CD14-positive monocyte (primary cell): ENCODE measurements at regions of chr1 and their contacts with region 1.

Region 1: DNA sequence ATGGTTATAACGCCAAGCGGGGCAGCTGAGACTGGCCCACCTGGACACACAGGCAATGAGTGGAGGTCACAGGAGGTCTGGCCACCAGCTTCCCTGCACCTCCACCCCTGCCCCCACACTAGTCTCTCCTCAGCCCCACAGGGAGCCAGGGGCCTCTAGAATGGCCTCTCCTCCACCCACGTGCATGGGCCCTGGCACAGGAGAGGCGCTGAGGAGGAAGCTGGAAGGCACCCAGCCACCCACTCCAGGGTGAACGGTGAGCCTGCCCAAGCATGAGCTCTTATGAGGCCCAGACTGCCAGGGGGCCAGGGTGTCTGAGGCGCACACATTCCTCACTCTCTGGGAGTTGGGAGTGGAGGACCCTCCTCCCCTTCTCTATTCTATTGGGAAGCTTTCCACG is 22.2 kb downstream of the LRP8 start:
- DNase-seq: no peak
- H3K4me3 ChIP-seq: no peak overlapping the region
- H3K4me3 Mint-ChIP-seq: no peak overlapping the region
- H3K27ac ChIP-seq: no peak overlapping the region
- H3K27ac Mint-ChIP-seq: peak overlapping the region in 4 of 7 donors; percentile 9 to 83 (median 58)
- H3K4me1 ChIP-seq: no peaks in the 10 kb centered on the region
- H3K4me1 Mint-ChIP-seq: no peaks in the 10 kb centered on the region
- H3K27me3 ChIP-seq: no peaks in the 10 kb centered on the region
- H3K27me3 Mint-ChIP-seq: no peaks in the 10 kb centered on the region
- CTCF ChIP-seq: no peak

Region 2: GRCh38 chr1:53348486-53349368 is 43.1 kb after region 1 on chr1:
- intact Hi-C with region 1: no loop called
- DNase-seq: no peak
- H3K4me3 ChIP-seq: no peak overlapping the region
- H3K4me3 Mint-ChIP-seq: no peak overlapping the region
- H3K27ac ChIP-seq: no peak overlapping the region
- H3K27ac Mint-ChIP-seq: no peak overlapping the region
- H3K4me1 ChIP-seq: no peaks in the 10 kb centered on the region
- H3K4me1 Mint-ChIP-seq: no peaks in the 10 kb centered on the region
- H3K27me3 ChIP-seq: no peaks in the 10 kb centered on the region
- H3K27me3 Mint-ChIP-seq: peaks cover 0 to 4% (median 3%) of the 10 kb centered on the region in 3 donors
- CTCF ChIP-seq: no peak

Region 3: DNA sequence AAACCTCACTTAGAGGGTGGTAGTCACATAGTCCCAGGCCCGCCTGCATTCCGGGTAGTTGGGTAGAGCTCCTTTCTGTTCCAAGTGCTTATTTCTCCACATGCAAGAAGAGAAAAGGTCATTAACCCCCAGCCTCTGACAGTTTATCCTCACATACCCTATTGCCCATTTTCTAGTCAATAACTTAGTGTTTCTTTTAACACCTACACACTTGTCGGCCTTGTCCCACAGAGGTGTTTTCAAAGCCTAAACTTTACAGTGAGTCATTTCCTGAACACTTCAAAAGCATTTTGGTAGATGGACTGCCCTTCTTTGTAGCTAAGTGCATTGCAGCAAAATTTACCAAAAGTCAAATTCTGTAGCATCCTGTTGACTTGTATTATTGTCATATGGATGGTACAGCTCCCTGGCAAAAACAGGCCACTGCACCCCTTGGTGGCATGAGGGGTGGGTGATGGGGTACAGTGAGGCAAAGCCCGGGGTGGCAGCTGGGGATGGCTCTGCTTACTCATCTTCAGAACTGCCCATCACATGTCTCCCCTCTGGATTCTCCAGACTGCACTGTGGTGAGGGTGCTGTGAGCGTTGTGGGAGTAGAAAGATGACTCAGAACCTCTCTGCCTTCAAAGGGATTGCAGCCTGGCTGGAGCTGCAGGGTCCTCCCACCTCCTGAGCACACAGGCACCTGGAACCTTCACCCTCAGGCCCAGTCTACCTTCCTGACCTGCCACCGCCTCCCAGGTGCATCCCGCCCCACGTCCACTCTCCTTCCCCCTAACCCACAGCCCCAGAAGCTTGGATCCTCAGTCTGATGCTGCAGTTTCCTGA is 107.7 kb after region 1 on chr1:
- intact Hi-C with region 1: no loop called
- DNase-seq: no peak
- H3K4me3 ChIP-seq: no peak overlapping the region
- H3K4me3 Mint-ChIP-seq: no peak overlapping the region
- H3K27ac ChIP-seq: no peak overlapping the region
- H3K27ac Mint-ChIP-seq: peak overlapping the region in 2 of 7 donors; percentile 21 to 50
- H3K4me1 ChIP-seq: no peaks in the 10 kb centered on the region
- H3K4me1 Mint-ChIP-seq: peaks cover 3% of the 10 kb centered on the region
- H3K27me3 ChIP-seq: no peaks in the 10 kb centered on the region
- H3K27me3 Mint-ChIP-seq: peaks cover 0 to 8% (median 3%) of the 10 kb centered on the region in 3 donors
- CTCF ChIP-seq: no peak

Region 4: DNA sequence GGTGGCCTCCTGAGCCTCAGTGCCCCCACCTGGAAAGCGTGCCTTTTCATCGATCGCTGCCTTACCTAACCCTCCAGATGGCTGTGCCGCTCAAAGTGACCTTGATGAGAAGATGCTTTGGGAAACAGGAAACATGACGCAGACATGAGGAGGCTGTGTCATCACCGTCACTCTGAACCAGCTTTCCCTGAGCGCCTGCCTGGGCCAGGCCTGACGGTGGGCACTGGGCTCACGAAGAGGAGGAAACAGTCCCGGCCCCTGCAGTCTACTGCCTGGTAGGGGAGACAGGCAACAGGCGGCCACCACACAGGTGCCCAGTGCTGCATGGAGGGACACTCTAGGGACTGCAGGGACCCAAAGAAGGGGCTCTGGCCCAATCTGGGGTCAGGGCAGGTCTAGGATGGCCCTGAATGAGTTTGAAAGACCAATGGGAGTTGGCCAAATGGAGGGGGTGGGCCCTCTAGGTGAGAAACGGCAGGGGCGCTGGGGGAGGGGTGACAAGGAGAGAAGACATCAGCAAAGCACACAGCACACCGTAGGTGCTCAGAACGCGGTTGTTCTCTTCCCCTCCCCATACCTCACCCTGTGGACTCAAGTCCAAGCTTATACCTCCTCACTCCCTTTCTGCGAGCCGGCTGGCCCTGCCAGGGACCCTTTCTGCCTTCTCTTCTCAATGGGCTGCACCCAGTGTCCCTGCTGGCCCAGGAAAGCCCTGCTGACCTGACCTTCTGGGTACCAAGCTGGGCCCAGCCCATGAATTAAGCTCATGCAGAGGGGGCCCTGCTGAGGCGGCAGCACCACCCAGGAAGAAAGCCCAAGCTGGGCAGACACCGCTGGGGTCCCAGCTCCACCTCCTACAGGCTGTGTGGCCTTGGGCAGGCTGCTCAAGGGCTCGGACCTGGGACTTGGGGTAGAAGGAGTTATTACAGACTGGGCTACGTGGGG is 388.4 kb after region 1 on chr1:
- intact Hi-C with region 1: loop called in 1 of 2 experiments (anchors 5 kb)
- DNase-seq: no peak
- H3K4me3 ChIP-seq: no peak overlapping the region
- H3K4me3 Mint-ChIP-seq: no peak overlapping the region
- H3K27ac ChIP-seq: no peak overlapping the region
- H3K27ac Mint-ChIP-seq: peak overlapping the region in 1 of 7 donors; percentile 47
- H3K4me1 ChIP-seq: no peaks in the 10 kb centered on the region
- H3K4me1 Mint-ChIP-seq: peaks cover 8% of the 10 kb centered on the region
- H3K27me3 ChIP-seq: no peaks in the 10 kb centered on the region
- H3K27me3 Mint-ChIP-seq: peaks cover 0 to 5% (median 3%) of the 10 kb centered on the region in 3 donors
- CTCF ChIP-seq: no peak